GM10248 (cell line): ENCODE measurements at regions of chr10 and their contacts with region 1.

Region 1: DNA sequence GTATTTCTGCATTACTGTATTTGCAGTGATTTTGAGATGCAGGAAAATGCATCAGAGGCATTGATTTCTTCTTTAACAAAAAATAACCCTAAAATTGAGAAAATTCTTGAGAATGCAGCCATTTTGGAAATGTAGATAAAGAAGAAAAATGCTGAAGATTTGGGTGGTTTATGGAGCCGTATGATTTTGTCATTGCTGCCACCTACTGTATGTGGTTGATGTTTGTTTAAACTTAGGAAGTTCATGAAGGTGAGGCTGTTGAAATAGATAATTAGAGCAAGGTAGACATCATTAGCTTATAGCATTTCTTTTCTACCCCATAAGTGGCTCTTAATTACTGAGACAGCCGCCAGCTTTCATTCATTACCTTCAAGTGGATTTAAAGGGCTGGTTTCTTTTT is 92.1 kb upstream of the SAMD8 start:
- DNase-seq: no peak
- CTCF ChIP-seq: peak; percentile 37

Region 2: GRCh38 chr10:74244097-74244685 is 775.2 kb before region 1 on chr10:
- CTCF ChIA-PET with region 1: interaction called, 15 read pairs
- POLR2A ChIA-PET with region 1: no interaction called
- DNase-seq: no peak
- CTCF ChIP-seq: peak; percentile 30

Region 3: DNA sequence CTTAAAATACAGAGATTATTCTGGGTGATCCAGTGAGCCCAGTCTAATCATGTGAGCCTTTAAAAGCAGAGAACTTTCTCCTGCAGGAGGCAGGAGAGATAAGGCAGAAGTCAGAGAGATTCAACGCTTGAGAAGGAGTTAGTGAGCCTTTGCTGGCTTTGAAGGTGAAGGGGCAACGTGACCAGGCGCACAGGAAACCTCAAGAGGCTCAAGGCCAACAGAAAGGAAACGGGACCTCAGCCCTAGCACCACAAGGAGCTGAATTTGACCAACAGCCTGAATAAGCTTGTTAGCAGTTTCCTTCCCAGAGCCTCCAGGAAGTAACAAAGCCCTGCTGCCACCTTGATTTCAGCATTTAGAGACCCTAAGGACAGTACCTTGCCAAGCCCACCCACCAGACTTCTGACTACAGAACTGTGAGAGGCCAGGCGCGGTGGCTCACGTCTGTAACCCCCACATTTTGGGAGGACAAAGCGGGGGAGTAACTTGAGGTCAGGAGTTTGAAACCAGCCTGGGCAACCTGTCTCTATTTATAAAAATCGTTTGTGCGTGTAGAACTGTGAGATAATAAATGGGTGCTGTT is 280.3 kb before region 1 on chr10:
- CTCF ChIA-PET with region 1: interaction called, 13 read pairs
- POLR2A ChIA-PET with region 1: no interaction called
- DNase-seq: peak; percentile 64
- CTCF ChIP-seq: peak; percentile 56

Region 4: GRCh38 chr10:75029857-75030256 is 10.5 kb after region 1 on chr10:
- CTCF ChIA-PET with region 1: interaction called, 17 read pairs
- POLR2A ChIA-PET with region 1: no interaction called
- DNase-seq: no peak
- CTCF ChIP-seq: no peak